Endothelial cell of umbilical vein (primary cell): ENCODE measurements at regions of chr21 and their contacts with region 1.

Region 1: GRCh38 chr21:36504067-36505058 is 24.4 kb upstream of the CLDN14 start:
- DNase-seq: peak; percentile 55
- H3K4me3 ChIP-seq: no peak overlapping the region
- H3K27ac ChIP-seq: no peak overlapping the region
- H3K4me1 ChIP-seq: no peaks in the 10 kb centered on the region
- H3K27me3 ChIP-seq: no peaks in the 10 kb centered on the region
- CTCF ChIP-seq: peak; percentile 61 to 67
- POLR2A ChIP-seq: no peak

Region 2: DNA sequence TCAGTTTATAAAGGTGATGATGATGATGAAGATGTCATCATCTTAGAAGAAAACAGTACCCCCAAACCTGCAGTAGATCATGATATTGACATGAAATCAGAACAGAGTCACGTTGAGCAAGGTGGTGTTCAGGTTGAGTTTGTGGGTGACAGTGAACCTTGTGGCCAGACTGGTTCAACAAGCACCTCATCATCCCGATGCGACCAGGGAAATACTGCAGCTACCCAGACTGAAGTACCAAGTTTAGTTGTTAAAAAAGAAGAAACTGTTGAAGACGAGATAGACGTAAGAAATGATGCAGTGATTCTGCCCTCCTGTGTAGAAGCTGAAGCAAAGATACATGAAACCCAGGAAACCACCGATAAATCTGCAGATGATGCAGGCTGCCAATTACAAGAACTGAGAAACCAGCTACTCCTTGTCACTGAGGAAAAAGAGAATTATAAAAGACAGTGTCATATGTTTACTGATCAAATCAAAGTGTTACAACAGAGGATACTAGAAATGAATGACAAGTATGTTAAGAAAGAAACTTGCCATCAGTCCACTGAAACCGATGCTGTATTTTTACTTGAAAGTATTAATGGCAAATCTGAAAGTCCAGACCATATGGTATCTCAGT is 135.2 kb before region 1 on chr21:
- CTCF ChIA-PET with region 1: no interaction called
- POLR2A ChIA-PET with region 1: no interaction called
- dilution Hi-C with region 1: no loop called
- intact Hi-C with region 1: no loop called
- DNase-seq: no peak
- H3K4me3 ChIP-seq: no peak overlapping the region
- H3K27ac ChIP-seq: no peak overlapping the region
- H3K4me1 ChIP-seq: no peaks in the 10 kb centered on the region
- H3K27me3 ChIP-seq: no peaks in the 10 kb centered on the region
- CTCF ChIP-seq: no peak
- POLR2A ChIP-seq: no peak

Region 3: GRCh38 chr21:36589355-36589971 is 85.1 kb after region 1 on chr21:
- CTCF ChIA-PET with region 1: interaction called, 6 read pairs
- POLR2A ChIA-PET with region 1: no interaction called
- dilution Hi-C with region 1: no loop called
- intact Hi-C with region 1: loop called (anchors 1 kb)
- DNase-seq: peak; percentile 36
- H3K4me3 ChIP-seq: no peak overlapping the region
- H3K27ac ChIP-seq: no peak overlapping the region
- H3K4me1 ChIP-seq: no peaks in the 10 kb centered on the region
- H3K27me3 ChIP-seq: no peaks in the 10 kb centered on the region
- CTCF ChIP-seq: peak; percentile 55 to 69
- POLR2A ChIP-seq: no peak

Region 4: DNA sequence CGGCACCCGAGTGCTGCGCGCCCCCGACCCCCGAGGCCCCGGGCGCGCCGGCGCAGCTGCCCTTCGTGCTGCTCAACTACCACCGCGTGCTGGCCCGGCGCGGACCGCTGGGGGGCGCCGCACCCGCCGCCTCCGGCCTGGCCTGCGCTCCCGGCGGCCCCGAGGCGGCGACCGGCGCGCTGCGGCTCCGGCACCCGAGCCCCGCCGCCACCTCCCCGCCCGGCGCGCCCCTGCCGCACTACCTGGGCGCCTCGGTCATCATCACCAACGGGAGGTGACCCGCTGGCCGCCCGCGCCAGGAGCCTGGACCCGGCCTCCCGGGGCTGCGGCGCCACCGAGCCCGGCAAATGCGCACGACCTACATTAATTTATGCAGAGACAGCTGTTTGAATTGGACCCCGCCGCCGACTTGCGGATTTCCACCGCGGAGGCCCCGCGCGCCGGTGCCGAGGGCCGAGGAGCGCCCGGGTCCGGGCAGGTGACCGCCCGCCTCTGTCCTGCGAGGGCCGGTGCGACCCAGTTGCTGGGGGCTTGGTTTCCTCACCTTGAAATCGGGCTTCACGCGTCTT is 243.5 kb after region 1 on chr21:
- CTCF ChIA-PET with region 1: no interaction called
- POLR2A ChIA-PET with region 1: no interaction called
- dilution Hi-C with region 1: no loop called
- intact Hi-C with region 1: loop called (anchors 5 kb)
- DNase-seq: peak; percentile 35
- H3K4me3 ChIP-seq: peak overlapping the region; percentile 16 to 37 (median 16)
- H3K27ac ChIP-seq: no peak overlapping the region
- H3K4me1 ChIP-seq: peaks cover 7% of the 10 kb centered on the region
- H3K27me3 ChIP-seq: peaks cover 0 to 8% of the 10 kb centered on the region in 2 experiments
- CTCF ChIP-seq: peak; percentile 20 to 39
- POLR2A ChIP-seq: no peak

Region 5: GRCh38 chr21:36909901-36910561 is 405.7 kb after region 1 on chr21:
- CTCF ChIA-PET with region 1: no interaction called
- POLR2A ChIA-PET with region 1: no interaction called
- dilution Hi-C with region 1: no loop called
- intact Hi-C with region 1: no loop called
- DNase-seq: peak; percentile 86
- H3K4me3 ChIP-seq: no peak overlapping the region
- H3K27ac ChIP-seq: peak overlapping the region; percentile 99
- H3K4me1 ChIP-seq: peaks cover 6% of the 10 kb centered on the region
- H3K27me3 ChIP-seq: no peaks in the 10 kb centered on the region
- CTCF ChIP-seq: no peak
- POLR2A ChIP-seq: no peak